HepG2 (cell line): ENCODE measurements at regions of chr5 and their contacts with region 1.

Region 1: DNA sequence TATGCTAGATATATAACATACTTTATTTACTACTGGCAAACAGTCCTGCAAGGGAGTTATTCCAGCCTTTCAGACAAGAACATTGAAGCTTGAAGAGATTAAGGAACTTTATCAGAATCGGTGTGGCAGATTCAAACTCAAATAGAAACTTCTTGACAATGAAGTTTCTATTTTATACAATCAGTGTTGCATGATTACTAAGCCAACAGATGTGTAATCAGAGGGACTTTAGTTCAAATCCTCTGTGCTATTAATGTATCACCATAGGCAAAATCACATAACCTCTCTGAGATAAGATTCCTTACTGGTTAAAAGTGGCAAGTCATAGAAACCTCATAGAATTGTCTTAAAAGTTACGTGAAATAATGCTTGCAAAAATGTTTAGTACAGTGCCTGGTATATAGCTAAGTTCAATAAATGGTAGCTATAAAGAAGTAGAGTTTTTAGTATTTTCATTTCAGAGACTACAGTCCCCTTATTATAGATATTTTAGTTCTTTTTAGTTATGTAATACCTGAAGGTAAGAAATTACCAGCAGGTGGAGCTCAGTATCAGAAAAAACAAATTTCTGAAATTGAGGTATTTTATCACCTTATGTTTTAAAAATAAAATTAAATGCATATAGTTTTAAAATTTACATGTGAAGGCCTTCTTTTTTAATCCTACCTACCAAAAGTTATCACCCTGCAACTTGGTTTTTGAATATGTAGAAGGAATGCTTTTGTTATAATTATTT is 172.1 kb downstream of the FER start:
- DNase-seq: no peak
- ATAC-seq: no peak
- H3K4me3 ChIP-seq: no peak overlapping the region
- H3K27ac ChIP-seq: no peak overlapping the region
- H3K4me1 ChIP-seq: no peaks in the 10 kb centered on the region
- H3K27me3 ChIP-seq: no peaks in the 10 kb centered on the region; a peak in 1 of 5 replicates
- CTCF ChIP-seq: no peak
- EP300 ChIP-seq: no peak
- POLR2A ChIP-seq: no peak
- RAD21 ChIP-seq: no peak

Region 2: DNA sequence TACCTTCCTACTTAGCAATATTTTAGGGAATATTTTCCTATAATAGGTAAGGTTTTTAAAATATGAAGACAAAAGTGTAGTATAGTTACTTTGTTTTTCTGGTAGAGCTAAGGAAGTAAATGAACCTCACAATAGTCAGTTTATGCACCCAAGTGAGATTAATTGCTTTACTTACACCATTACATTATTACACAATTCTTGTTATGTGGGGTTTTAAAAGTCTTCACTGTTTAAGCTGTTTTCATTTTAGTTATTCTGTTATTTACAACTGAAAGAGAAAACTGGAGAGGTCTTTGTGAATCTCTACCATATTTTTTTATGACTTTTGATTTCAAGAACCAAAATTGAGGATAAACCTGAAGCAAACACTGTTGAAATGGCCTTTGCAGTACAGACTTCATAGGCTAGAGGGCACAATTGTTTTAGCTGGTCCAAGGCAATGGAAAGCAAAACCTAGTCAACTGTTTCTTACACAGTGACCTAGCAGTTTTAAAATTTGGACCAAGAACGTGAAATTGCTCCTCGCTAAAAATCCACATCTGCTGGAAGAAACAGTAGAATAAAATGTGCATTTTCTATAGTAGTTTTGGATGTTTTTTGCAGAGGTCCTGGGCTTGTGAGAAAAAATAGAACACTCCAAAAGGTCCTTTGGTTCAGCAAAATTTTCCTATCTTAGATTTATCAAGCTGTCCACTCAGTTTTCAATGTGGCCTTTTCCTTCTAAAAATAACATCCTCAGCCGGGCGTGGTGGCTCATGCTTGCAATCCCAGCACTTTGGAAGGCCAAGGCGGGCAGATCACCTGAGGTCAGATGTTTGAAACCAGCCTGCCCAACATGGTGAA is 238.5 kb before region 1 on chr5:
- CTCF ChIA-PET with region 1: no interaction called
- POLR2A ChIA-PET with region 1: no interaction called
- in situ Hi-C with region 1: no loop called
- intact Hi-C with region 1: loop called (anchors 2 kb)
- DNase-seq: peak; percentile 50
- ATAC-seq: peak; percentile 78
- H3K4me3 ChIP-seq: no peak overlapping the region
- H3K27ac ChIP-seq: no peak overlapping the region
- H3K4me1 ChIP-seq: peaks cover 12% of the 10 kb centered on the region
- H3K27me3 ChIP-seq: no peaks in the 10 kb centered on the region; a peak in 1 of 5 replicates
- CTCF ChIP-seq: peak; percentile 78
- EP300 ChIP-seq: no peak
- POLR2A ChIP-seq: no peak
- RAD21 ChIP-seq: peak; percentile 65

Region 3: DNA sequence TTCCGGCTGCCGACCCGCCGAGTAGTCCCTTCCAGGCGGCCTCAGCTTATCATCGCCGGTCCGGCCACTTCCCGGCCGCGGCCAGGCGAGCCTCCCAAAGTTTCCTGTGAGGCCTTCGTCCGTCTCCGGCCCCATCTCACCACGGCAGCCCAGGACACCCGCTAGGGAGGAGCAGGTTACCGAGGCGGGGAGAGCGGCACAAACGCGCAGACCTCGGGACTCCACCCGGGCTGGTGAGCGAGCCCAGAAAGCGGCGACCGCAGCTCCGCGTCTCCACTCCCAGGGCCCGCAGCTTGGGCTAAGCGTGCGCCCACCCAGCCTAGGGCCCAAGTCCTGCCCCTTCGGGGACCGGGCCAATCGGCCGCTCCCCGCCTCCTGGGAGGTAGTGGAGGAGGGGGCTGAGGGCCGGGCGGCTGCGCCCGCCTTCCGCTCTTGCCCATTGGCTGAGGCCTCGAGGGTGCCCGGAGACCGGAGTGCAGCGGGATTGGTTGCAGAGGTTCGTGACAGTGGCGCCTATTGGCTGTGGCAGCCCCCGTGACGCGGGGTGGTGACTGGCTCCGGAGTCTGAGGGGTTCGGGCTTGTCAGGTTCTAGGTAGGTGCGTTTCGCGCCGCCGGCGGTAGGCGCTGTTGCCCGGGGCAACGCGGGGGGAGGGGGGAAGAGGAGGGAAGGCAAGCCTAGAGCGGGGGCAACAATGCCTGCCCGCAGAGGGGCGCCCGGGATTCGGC is 171.2 kb before region 1 on chr5:
- CTCF ChIA-PET with region 1: no interaction called
- POLR2A ChIA-PET with region 1: no interaction called
- in situ Hi-C with region 1: no loop called
- intact Hi-C with region 1: loop called (anchors 5 kb)
- DNase-seq: peak; percentile 96
- ATAC-seq: peak; percentile 98
- H3K4me3 ChIP-seq: peak overlapping the region; percentile 80 to 83 (median 80)
- H3K27ac ChIP-seq: peak overlapping the region; percentile 81
- H3K4me1 ChIP-seq: peaks cover 14% of the 10 kb centered on the region
- H3K27me3 ChIP-seq: peaks cover 0 to 4% of the 10 kb centered on the region in 2 experiments; a peak in 1 of 5 replicates
- CTCF ChIP-seq: peak; percentile 69
- EP300 ChIP-seq: no peak
- POLR2A ChIP-seq: peak; percentile 96 to 99
- RAD21 ChIP-seq: peak; percentile 50; the same call in 1 of the 2 replicates

Region 4: DNA sequence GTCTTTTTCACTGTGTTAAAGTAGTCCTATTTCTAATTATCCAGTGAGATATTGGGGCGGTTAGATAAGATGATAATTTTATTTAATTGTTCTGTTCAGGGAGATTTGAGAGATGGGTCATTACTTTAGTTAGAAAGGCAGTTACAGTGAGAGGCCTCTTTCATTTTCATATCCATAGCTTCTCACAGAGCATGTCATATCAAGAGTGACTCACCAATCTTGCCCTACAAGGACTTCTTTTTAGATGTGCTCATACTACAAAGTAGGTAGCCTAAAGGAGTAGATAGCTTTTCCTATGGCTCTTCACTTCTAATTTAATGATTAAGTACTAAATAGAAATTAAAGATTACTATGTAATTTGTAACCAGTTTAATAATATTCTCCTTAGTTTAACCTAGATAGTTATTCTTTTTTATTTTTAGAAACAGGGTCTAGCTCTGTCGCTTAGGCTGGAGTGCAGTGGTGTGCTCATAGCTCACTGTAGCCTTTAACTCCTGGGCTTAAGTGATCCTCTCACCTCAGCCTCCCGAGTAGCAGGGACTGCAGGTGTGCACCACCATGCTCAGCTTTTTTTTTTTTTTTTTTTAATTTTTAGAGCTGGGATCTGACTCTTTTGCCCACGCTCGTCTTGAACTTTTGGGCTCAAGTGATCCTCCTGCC is 101.0 kb before region 1 on chr5:
- CTCF ChIA-PET with region 1: no interaction called
- POLR2A ChIA-PET with region 1: no interaction called
- in situ Hi-C with region 1: no loop called
- intact Hi-C with region 1: no loop called
- DNase-seq: no peak
- ATAC-seq: no peak
- H3K4me3 ChIP-seq: no peak overlapping the region
- H3K27ac ChIP-seq: no peak overlapping the region
- H3K4me1 ChIP-seq: no peaks in the 10 kb centered on the region
- H3K27me3 ChIP-seq: no peaks in the 10 kb centered on the region
- CTCF ChIP-seq: no peak
- EP300 ChIP-seq: no peak
- POLR2A ChIP-seq: no peak
- RAD21 ChIP-seq: no peak

Region 5: GRCh38 chr5:109105631-109106267 is 186.0 kb after region 1 on chr5:
- CTCF ChIA-PET with region 1: no interaction called
- POLR2A ChIA-PET with region 1: no interaction called
- in situ Hi-C with region 1: no loop called
- intact Hi-C with region 1: no loop called
- DNase-seq: no peak
- ATAC-seq: no peak
- H3K4me3 ChIP-seq: no peak overlapping the region
- H3K27ac ChIP-seq: no peak overlapping the region
- H3K4me1 ChIP-seq: no peaks in the 10 kb centered on the region
- H3K27me3 ChIP-seq: no peaks in the 10 kb centered on the region
- CTCF ChIP-seq: no peak
- EP300 ChIP-seq: no peak
- POLR2A ChIP-seq: no peak
- RAD21 ChIP-seq: no peak

Region 6: GRCh38 chr5:109218818-109219217 is 299.1 kb after region 1 on chr5:
- CTCF ChIA-PET with region 1: no interaction called
- POLR2A ChIA-PET with region 1: no interaction called
- in situ Hi-C with region 1: no loop called
- intact Hi-C with region 1: loop called (anchors 10 kb)
- DNase-seq: no peak
- ATAC-seq: no peak
- H3K4me3 ChIP-seq: no peak overlapping the region
- H3K27ac ChIP-seq: no peak overlapping the region
- H3K4me1 ChIP-seq: peaks cover 15% of the 10 kb centered on the region
- H3K27me3 ChIP-seq: peaks cover 0 to 14% of the 10 kb centered on the region in 2 experiments; a peak in 3 of 5 replicates
- CTCF ChIP-seq: no peak
- EP300 ChIP-seq: no peak
- POLR2A ChIP-seq: no peak
- RAD21 ChIP-seq: no peak

Region 7: GRCh38 chr5:109479260-109479860 is 559.6 kb after region 1 on chr5:
- CTCF ChIA-PET with region 1: interaction called, 3 read pairs
- POLR2A ChIA-PET with region 1: no interaction called
- in situ Hi-C with region 1: loop called (anchors 10 kb)
- intact Hi-C with region 1: no loop called
- DNase-seq: peak; percentile 18
- ATAC-seq: no peak
- H3K4me3 ChIP-seq: no peak overlapping the region
- H3K27ac ChIP-seq: no peak overlapping the region
- H3K4me1 ChIP-seq: peaks cover 20% of the 10 kb centered on the region
- H3K27me3 ChIP-seq: no peaks in the 10 kb centered on the region
- CTCF ChIP-seq: no peak
- EP300 ChIP-seq: no peak
- POLR2A ChIP-seq: no peak
- RAD21 ChIP-seq: no peak